Posterior vena cava (tissue), 2 donors: ENCODE measurements at regions of chr10 and their contacts with region 1.

Region 1: DNA sequence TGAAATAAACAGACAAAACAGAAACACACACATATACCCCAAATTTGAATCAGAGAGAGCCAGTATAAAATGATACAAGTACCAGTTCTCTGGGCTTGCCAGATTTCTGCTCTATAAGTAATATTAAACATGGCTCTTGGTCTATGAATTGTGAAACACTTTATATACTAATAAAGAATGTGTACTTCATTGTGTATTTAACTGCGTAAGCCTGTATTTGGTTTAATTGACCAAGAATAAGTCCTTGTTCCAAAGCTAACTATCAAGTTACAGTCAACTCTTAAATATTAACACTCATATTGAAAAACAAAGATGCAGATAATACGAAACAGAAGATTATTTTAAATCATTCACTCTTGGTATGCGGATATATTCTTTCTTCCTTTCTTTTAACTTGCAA is 8.7 kb downstream of the FGFR2 start:
- DNase-seq: no peak

Region 2: GRCh38 chr10:121337427-121337826 is 252.1 kb before region 1 on chr10:
- intact Hi-C with region 1: no loop called
- DNase-seq: no peak

Region 3: GRCh38 chr10:121627821-121628581 is 38.4 kb after region 1 on chr10:
- intact Hi-C with region 1: loop called in 1 of 2 experiments (anchors 1 kb)
- DNase-seq: peak; percentile 40

Region 4: DNA sequence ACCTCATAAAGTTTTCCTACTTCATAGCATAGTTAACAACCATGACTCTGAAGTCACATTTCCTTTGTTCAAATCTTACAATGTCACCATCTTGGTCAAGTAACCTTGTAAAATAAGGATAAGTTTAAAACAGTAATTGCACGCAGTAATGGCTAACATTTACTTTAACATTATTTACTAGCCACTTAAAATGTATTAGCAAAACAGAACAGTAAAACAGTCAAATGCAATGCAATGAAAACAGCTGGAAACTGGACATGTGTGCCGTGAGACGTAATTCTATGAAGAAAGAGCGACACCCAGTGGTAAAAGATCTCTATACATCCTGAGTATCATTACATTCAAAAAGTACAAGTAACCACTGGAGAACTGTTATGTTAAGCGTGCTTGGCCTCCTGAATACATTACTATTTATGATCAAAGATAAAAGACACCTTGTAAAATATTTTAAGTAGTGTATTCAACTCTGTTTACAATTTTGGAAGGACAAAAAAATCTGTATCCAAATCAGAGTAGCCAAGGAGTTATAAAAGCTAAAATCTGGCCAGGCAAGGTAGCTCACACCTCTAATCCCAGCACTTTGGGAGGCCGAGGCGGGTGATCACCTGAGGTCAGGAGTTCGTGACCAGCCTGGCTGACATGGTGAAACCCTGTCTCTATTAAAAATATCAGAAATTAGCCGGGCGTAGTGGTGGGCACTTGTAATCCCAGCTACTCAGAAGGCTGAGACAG is 311.1 kb after region 1 on chr10:
- intact Hi-C with region 1: no loop called
- DNase-seq: no peak